Esophagus muscularis mucosa (tissue), 4 donors: ENCODE measurements at regions of chr18 and their contacts with region 1.

Region 1: DNA sequence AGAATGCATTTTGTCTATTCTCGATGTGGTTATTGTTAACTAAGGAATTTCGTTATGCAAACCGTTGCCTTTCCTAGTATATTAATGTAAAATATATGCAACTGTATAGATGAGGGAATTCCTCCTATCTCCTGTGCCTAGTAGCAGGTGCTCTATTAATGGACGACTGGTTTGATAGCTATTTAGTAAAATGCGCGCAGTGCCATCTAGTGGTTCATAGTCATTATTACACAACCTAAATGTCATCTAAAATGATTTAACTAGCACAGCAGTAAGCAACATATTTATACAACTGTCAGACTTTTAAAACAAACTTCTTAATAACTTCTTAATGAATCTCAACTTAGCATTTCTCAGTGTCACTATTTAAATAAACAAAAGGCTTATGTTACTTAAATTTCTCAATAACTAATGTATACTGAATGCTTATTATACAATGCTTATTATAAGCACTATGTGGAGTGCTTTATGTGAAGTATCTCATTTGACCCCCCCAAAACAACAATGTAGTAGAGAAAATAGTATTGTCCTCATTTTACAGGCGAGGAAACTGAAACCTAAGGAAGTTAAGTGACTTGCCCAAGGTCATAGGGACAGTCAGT is 77.9 kb downstream of the DTNA start:
- DNase-seq: no peak
- H3K4me3 ChIP-seq: no peak overlapping the region
- H3K27ac ChIP-seq: no peak overlapping the region
- H3K4me1 ChIP-seq: peaks cover 0 to 23% (median 12%) of the 10 kb centered on the region in 4 donors
- H3K27me3 ChIP-seq: no peaks in the 10 kb centered on the region
- CTCF ChIP-seq: peak; percentile 77 to 78 (median 78)
- EP300 ChIP-seq: no peak
- POLR2A ChIP-seq: no peak

Region 2: DNA sequence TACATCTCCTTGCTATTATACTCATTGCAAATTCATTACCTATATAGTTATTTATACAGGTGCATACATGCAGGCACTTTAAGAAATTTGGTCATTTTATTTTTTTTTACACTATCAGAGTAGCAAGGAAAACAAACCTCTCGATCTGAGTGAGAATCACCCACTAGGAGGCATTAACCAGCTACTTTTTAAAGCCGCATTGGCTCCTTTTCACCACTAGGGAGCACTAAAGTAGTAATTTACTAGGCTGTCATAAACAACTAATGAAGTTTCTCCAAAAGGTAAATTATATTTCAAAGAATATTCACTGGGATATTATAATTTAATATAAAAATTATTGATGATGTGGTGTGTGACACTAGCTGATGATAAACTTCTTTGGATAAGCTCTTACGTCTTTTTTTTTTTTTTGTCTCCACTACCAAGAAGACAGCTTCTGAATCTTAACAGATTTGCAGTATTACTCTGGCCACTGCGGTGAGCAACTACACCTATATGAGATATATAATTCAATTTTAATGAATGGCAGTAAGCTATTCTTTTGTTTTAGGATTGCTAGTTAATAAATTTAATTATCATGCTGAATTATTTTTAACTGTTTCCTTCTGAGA is 665.2 kb before region 1 on chr18:
- intact Hi-C with region 1: loop called (anchors 5 kb)
- DNase-seq: no peak
- H3K4me3 ChIP-seq: no peak overlapping the region
- H3K27ac ChIP-seq: no peak overlapping the region
- H3K4me1 ChIP-seq: no peaks in the 10 kb centered on the region
- H3K27me3 ChIP-seq: no peaks in the 10 kb centered on the region
- CTCF ChIP-seq: peak; percentile 74 to 87 (median 81)
- EP300 ChIP-seq: no peak
- POLR2A ChIP-seq: no peak

Region 3: DNA sequence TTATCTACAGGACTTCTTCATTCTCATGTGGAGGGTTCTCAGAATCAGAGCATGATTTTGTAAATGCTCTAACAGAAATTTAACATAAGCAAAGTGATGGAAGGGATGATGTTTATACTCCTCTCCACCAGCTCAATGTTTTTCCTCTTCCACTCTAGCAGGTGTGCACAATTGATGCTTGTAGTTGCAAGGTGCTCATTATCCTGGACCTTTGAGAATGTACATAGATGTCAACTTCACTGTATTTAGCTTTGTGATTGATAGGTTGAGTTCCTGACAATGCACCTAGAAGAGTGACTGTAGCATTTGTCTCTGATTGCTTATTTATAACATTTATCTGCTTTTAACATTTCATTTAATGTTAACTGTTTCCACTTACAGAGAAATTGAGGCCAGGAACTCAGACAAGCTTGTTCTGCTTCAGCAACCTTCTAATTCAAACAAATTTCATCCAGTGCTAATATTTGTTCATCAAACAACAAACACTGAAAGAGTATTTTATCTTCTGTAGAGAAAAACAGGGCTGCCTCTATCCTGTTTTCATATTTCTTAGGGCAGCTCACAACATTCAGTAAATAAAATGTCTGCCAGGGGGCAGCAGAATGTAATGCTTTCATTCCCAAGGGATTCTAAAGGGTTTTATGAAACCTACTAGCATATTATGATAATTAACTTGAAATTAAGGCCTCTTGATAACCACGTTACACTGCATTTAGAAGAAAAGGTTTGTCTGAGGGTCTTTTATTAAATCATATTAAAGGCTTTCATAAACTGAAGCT is 435.5 kb before region 1 on chr18:
- intact Hi-C with region 1: loop called (anchors 10 kb)
- DNase-seq: no peak
- H3K4me3 ChIP-seq: no peak overlapping the region
- H3K27ac ChIP-seq: no peak overlapping the region
- H3K4me1 ChIP-seq: peaks cover 0 to 3% (median 0%) of the 10 kb centered on the region in 4 donors
- H3K27me3 ChIP-seq: no peaks in the 10 kb centered on the region
- CTCF ChIP-seq: peak; percentile 16 to 35 (median 23)
- EP300 ChIP-seq: no peak
- POLR2A ChIP-seq: no peak

Region 4: GRCh38 chr18:34493099-34493544 is 294.9 kb before region 1 on chr18:
- intact Hi-C with region 1: loop called (anchors 5 kb)
- DNase-seq: no peak
- H3K4me3 ChIP-seq: peak overlapping the region; percentile 63 to 80 (median 72)
- H3K27ac ChIP-seq: peak overlapping the region; percentile 85 to 89 (median 86)
- H3K4me1 ChIP-seq: peaks cover 6 to 20% (median 17%) of the 10 kb centered on the region in 4 donors
- H3K27me3 ChIP-seq: peaks cover 0 to 3% (median 0%) of the 10 kb centered on the region in 4 donors
- CTCF ChIP-seq: no peak
- EP300 ChIP-seq: no peak
- POLR2A ChIP-seq: no peak

Region 5: GRCh38 chr18:34592961-34593382 is 195.1 kb before region 1 on chr18:
- intact Hi-C with region 1: loop called (anchors 2 kb)
- DNase-seq: no peak
- H3K4me3 ChIP-seq: peak overlapping the region; percentile 44 to 62 (median 54)
- H3K27ac ChIP-seq: peak overlapping the region; percentile 82 to 87 (median 83)
- H3K4me1 ChIP-seq: peaks cover 6 to 38% (median 35%) of the 10 kb centered on the region in 4 donors
- H3K27me3 ChIP-seq: no peaks in the 10 kb centered on the region
- CTCF ChIP-seq: no peak
- EP300 ChIP-seq: peak; percentile 32
- POLR2A ChIP-seq: peak; percentile 25

Region 6: GRCh38 chr18:34661464-34662111 is 126.4 kb before region 1 on chr18:
- intact Hi-C with region 1: loop called (anchors 5 kb)
- DNase-seq: no peak
- H3K4me3 ChIP-seq: no peak overlapping the region
- H3K27ac ChIP-seq: peak overlapping the region; percentile 73 to 77 (median 76)
- H3K4me1 ChIP-seq: peaks cover 35 to 55% (median 41%) of the 10 kb centered on the region in 4 donors
- H3K27me3 ChIP-seq: no peaks in the 10 kb centered on the region
- CTCF ChIP-seq: peak; percentile 64 to 78 (median 65)
- EP300 ChIP-seq: no peak
- POLR2A ChIP-seq: no peak